HepG2 (cell line): ENCODE measurements at regions of chr7 and their contacts with region 1.

Region 1: GRCh38 chr7:95434557-95435421 is at the start of gene PON2:
- DNase-seq: peak; percentile 90
- ATAC-seq: peak; percentile 98
- H3K4me3 ChIP-seq: peak within 1 kb of the TSS; percentile 61 to 91 (median 83)
- H3K27ac ChIP-seq: peak within 1 kb of the TSS; percentile 91
- H3K4me1 ChIP-seq: peaks cover 88% of the 10 kb centered on the region
- H3K27me3 ChIP-seq: no peaks in the 10 kb centered on the region
- CTCF ChIP-seq: peak; percentile 23; the same call in 1 of the 2 replicates
- EP300 ChIP-seq: no peak
- POLR2A ChIP-seq: peak; percentile 91 to 92
- RAD21 ChIP-seq: peak; percentile 54
- total RNA-seq, gene PON2: 110 and 202 TPM in 2 replicates

Region 2: DNA sequence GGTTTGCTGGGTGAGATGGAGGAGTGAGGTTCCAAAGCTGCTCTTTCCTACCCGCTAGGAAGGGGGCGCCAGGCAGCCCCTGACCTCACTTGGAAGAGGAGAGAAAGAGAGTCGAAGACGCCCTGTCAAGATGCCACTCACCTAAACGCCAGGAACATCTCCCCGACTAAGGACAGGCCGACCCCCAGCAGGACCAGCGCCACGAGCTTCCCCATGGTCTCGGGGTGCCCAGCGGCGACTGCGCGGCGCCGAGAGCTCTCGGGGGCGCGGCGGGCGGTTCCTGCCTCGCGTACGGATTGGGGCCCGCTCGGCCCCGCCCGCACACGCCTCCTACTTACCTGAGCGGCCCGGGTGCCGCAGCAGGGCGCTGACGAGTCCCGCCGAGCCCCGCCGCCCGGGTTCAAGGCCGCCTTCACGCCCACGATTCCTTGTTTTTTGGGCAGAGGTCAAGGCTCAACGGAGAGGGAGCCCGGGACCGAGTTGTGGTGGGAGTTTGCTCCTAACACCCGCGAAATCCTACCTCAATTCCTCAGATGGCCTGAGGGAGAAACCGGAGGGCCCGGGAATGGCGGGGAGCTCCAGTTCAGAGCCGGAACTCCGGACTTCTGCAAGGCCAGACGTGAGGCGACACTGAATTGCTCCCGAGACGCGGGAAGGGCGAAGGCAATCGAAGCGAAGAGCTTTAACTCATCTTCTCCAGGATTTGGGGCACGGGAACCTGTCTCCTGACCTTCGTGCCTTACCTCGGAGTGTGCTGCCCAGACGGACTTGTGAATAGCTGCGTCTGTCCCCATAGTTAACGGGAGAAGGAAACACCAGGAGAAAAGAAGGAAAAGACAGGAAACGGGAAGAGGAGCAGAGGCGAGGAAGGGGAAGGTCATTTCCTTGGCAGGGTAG is 38.4 kb before region 1 on chr7 and contains the start of gene PON3:
- CTCF ChIA-PET with region 1: no interaction called
- POLR2A ChIA-PET with region 1: interaction called, 39 read pairs
- in situ Hi-C with region 1: no loop called
- intact Hi-C with region 1: no loop called
- DNase-seq: peak; percentile 68
- ATAC-seq: peak; percentile 95
- H3K4me3 ChIP-seq: peak within 1 kb of the TSS; percentile 76 to 92 (median 91)
- H3K27ac ChIP-seq: peak within 1 kb of the TSS; percentile 76
- H3K4me1 ChIP-seq: peaks cover 32% of the 10 kb centered on the region
- H3K27me3 ChIP-seq: no peaks in the 10 kb centered on the region; a peak in 1 of 5 replicates
- CTCF ChIP-seq: peak; percentile 77
- EP300 ChIP-seq: no peak; a peak in 1 of 4 replicates
- POLR2A ChIP-seq: peak; percentile 43 to 70
- RAD21 ChIP-seq: peak; percentile 59
- total RNA-seq, gene PON3: 14.1 and 23.6 TPM in 2 replicates

Region 3: GRCh38 chr7:95421000-95421846 is 13.6 kb before region 1 on chr7:
- CTCF ChIA-PET with region 1: no interaction called
- POLR2A ChIA-PET with region 1: interaction called, 19 read pairs
- in situ Hi-C with region 1: no loop called
- intact Hi-C with region 1: no loop called
- DNase-seq: no peak
- ATAC-seq: peak; percentile 63
- H3K4me3 ChIP-seq: no peak overlapping the region
- H3K27ac ChIP-seq: peak overlapping the region; percentile 60
- H3K4me1 ChIP-seq: peaks cover 57% of the 10 kb centered on the region
- H3K27me3 ChIP-seq: no peaks in the 10 kb centered on the region
- CTCF ChIP-seq: no peak
- EP300 ChIP-seq: no peak
- POLR2A ChIP-seq: no peak
- RAD21 ChIP-seq: no peak

Region 4: DNA sequence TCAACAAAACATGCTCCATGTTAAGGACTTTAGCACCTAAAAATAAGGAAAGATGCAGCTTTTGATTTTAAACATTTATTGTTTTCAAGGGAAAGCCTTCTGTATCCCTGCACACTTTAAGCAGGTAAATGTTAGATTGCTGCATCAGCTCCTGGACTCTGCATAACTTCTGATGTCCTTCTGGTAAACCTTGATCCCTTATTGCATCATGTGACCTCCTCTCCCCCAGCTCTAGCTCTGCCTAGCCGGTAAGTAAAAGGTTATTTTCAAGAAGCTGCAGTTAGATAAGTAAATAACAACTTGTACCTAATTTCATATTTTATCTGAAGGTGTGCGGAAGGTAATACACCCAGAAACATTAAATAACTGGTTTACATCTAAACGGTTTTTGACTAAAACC is 124.1 kb after region 1 on chr7:
- CTCF ChIA-PET with region 1: no interaction called
- POLR2A ChIA-PET with region 1: no interaction called
- in situ Hi-C with region 1: no loop called
- intact Hi-C with region 1: no loop called
- DNase-seq: no peak
- ATAC-seq: no peak; the same call in 2 of the 3 replicates
- H3K4me3 ChIP-seq: no peak overlapping the region
- H3K27ac ChIP-seq: no peak overlapping the region
- H3K4me1 ChIP-seq: no peaks in the 10 kb centered on the region
- H3K27me3 ChIP-seq: peaks cover 0 to 4% of the 10 kb centered on the region in 2 experiments; a peak in 2 of 5 replicates
- CTCF ChIP-seq: no peak
- EP300 ChIP-seq: no peak
- POLR2A ChIP-seq: no peak
- RAD21 ChIP-seq: no peak

Region 5: GRCh38 chr7:95690367-95690947 is 255.7 kb after region 1 on chr7:
- CTCF ChIA-PET with region 1: no interaction called
- POLR2A ChIA-PET with region 1: no interaction called
- in situ Hi-C with region 1: no loop called
- intact Hi-C with region 1: no loop called
- DNase-seq: peak; percentile 47
- ATAC-seq: peak; percentile 83
- H3K4me3 ChIP-seq: no peak overlapping the region
- H3K27ac ChIP-seq: no peak overlapping the region
- H3K4me1 ChIP-seq: no peaks in the 10 kb centered on the region
- H3K27me3 ChIP-seq: no peaks in the 10 kb centered on the region
- CTCF ChIP-seq: peak; percentile 72
- EP300 ChIP-seq: no peak
- POLR2A ChIP-seq: no peak
- RAD21 ChIP-seq: peak; percentile 25; the same call in 1 of the 2 replicates